Dorsolateral prefrontal cortex (tissue), 120 donors: ENCODE measurements at regions of chr17 and their contacts with region 1.

Region 1: DNA sequence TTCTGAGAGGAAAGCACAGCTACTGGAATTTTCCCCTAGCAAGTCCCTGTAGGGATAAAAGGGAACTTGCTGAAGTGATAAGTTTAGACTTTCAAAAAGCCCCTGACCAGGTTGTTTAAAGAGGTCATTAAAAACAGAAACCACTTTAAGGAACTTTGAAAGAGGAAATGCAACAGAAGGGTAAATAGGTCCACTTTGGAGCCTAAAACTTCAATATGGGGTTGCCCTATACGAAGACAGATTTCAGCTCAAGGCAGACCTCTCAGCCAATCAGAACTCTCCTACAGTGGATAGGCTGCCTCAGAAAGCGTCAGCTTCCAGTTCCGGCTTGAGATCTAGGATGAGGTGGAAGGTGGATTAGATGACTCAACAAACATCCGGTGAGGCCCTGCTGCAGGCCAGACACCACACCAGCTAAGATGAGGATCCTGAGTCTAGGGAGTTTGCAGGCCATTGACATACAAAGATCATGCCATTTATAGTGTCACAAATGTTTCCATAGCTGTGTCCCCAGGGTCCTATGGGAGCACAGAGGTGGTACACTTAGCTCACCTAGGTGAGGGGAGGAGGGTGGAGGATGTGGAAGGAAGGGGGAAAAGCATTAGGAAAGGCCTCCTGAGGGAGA is 7.9 kb upstream of the MFSD6L start:
- DNase-seq: no peak
- H3K4me3 ChIP-seq: no peak overlapping the region
- H3K27ac ChIP-seq: peak overlapping the region in 17 of 59 donors; percentile 12 to 62 (median 36)
- H3K27me3 ChIP-seq: peaks cover 0 to 9% (median 0%) of the 10 kb centered on the region in 45 donors
- CTCF ChIP-seq: no peak

Region 2: DNA sequence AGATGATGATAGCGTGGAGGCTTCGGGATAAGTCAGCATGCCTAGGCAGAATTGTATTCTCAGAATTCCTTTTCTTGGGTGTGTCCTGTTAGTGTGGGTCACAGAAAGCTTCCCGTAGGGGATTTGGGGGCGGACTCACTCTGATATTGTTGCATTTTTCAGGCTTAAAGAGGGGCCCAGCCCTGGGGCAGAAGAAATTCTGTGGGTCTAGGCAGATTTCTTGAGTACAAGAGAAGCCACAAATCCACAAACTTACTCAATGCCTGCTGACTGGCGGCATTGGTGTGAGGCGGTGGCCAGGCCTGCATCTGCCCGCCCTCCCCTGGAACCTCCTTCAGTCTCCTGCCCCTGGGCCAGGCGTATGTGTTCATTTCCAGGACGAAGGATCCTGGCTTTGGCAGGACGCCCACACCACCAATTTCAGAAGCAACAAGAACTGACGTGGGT is 80.0 kb before region 1 on chr17:
- intact Hi-C with region 1: loop called in 1 of 2 experiments (anchors 5 kb)
- DNase-seq: no peak
- H3K4me3 ChIP-seq: no peak overlapping the region
- H3K27ac ChIP-seq: no peak overlapping the region
- H3K27me3 ChIP-seq: no peaks in the 10 kb centered on the region
- CTCF ChIP-seq: no peak